ENCODE measurements at regions of chr20 and their contacts with region 1.

Region 1: GRCh38 chr20:266596-267562 is 9.4 kb downstream of the DEFB132 start:
- DNase-seq: peak; percentile 84 to 90 (median 85)
- ATAC-seq: peak; percentile 80 to 94 (median 92)
- H3K4me3 ChIP-seq: peak overlapping the region; percentile 15 to 61 (median 54)
- H3K27ac ChIP-seq: peak overlapping the region in 2 of 12 donors; percentile 5 to 39
- H3K4me1 ChIP-seq: peaks cover 0 to 10% (median 0%) of the 10 kb centered on the region in 12 donors
- H3K27me3 ChIP-seq: no peaks in the 10 kb centered on the region
- CTCF ChIP-seq: peak; percentile 91 to 99 (median 97)
- POLR2A ChIP-seq: no peak

Region 2: GRCh38 chr20:189611-190010 is 77.3 kb before region 1 on chr20 and contains the start of gene DEFB128:
- intact Hi-C with region 1: no loop called
- DNase-seq: no peak
- ATAC-seq: no peak
- H3K4me3 ChIP-seq: no peak within 1 kb of the TSS
- H3K27ac ChIP-seq: no peak within 1 kb of the TSS
- H3K4me1 ChIP-seq: no peaks in the 10 kb centered on the region
- H3K27me3 ChIP-seq: no peaks in the 10 kb centered on the region
- CTCF ChIP-seq: no peak
- POLR2A ChIP-seq: no peak
- total RNA-seq, gene DEFB128: not detected

Region 3: DNA sequence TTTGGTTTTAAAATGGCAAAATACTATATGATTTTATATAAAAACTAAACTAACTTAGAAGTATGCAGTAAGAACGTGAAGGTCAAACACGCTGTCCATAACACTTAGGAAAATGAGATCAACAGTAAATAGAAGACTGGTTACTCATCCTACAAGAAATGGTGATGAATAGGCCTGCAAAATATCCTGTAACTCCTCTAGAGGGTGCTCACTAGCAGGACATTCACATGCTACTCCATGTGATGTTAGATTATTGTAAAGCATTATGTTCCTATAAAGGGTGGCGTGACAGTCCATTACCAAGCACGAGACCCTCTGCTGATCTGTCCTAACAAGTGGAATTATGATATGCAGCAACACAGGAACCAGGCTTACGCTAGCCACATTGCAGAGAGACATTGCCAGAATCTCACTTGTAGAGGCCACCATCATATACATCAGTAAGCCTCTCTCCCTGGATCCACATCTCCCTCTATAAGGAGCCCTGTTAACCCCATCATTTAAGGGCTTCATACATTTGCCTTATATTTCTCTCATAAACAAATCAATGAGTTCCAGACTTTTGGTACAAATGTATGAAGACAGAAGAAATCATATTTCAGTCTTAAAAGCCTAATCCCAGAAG is 57.8 kb before region 1 on chr20:
- intact Hi-C with region 1: loop called in 1 of 10 experiments (anchors 5 kb)
- DNase-seq: no peak
- ATAC-seq: peak in 3 of 4 donors; percentile 71 to 77 (median 76)
- H3K4me3 ChIP-seq: no peak overlapping the region
- H3K27ac ChIP-seq: no peak overlapping the region
- H3K4me1 ChIP-seq: peaks cover 0 to 8% (median 0%) of the 10 kb centered on the region in 12 donors
- H3K27me3 ChIP-seq: no peaks in the 10 kb centered on the region
- CTCF ChIP-seq: peak; percentile 15 to 67 (median 50)
- POLR2A ChIP-seq: no peak

Region 4: GRCh38 chr20:235891-236290 is 31.0 kb before region 1 on chr20:
- intact Hi-C with region 1: loop called in 1 of 10 experiments (anchors 2 kb)
- DNase-seq: peak in 1 of 5 donors; percentile 42
- ATAC-seq: peak in 3 of 4 donors; percentile 47 to 74 (median 73)
- H3K4me3 ChIP-seq: no peak overlapping the region
- H3K27ac ChIP-seq: no peak overlapping the region
- H3K4me1 ChIP-seq: peaks cover 0 to 8% (median 0%) of the 10 kb centered on the region in 12 donors
- H3K27me3 ChIP-seq: peaks cover 0 to 5% (median 0%) of the 10 kb centered on the region in 9 donors
- CTCF ChIP-seq: peak in 8 of 12 donors; percentile 11 to 54 (median 28)
- POLR2A ChIP-seq: no peak

Measured in heart left ventricle (tissue), 16 donors.